Ascending aorta (tissue), 2 donors: ENCODE measurements at regions of chr17 and their contacts with region 1.

Region 1: DNA sequence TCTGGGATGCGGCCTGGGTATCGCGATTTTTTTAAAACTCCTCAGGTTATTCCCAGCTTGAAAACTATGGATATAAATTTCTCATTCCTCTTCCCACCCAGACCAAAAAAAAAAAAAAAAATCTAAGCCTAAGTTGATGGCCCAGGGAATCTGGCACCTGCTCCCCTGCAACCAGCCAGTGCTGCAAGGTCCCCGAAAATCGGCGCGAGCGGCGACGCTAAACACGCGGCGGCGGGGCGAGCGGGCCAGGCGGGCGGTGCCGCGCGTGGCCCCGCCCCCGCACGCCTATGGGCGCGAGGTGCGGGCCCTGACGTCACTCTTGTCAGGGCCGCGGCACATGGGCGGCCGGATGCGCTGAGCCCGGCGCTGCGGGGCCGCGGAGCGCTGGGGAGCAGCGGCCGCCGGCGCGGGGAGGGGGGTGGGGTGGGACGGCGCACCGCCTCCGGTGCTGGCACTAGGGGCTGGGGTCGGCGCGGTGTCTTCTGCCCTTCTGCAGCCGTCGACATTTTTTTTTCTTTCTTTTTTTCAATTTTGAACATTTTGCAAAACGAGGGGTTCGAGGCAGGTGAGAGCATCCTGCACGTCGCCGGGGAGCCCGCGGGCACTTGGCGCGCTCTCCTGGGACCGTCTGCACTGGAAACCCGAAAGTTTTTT is at the start of gene HLF:
- DNase-seq: peak in 1 of 2 donors; percentile 86
- H3K4me3 ChIP-seq: peak within 1 kb of the TSS; percentile 60 to 85
- H3K27ac ChIP-seq: peak within 1 kb of the TSS; percentile 85 to 90
- H3K4me1 ChIP-seq: peaks cover 10 to 17% of the 10 kb centered on the region in 2 donors
- H3K27me3 ChIP-seq: no peaks in the 10 kb centered on the region
- CTCF ChIP-seq: no peak
- total RNA-seq, gene HLF: 11.3 TPM

Region 2: DNA sequence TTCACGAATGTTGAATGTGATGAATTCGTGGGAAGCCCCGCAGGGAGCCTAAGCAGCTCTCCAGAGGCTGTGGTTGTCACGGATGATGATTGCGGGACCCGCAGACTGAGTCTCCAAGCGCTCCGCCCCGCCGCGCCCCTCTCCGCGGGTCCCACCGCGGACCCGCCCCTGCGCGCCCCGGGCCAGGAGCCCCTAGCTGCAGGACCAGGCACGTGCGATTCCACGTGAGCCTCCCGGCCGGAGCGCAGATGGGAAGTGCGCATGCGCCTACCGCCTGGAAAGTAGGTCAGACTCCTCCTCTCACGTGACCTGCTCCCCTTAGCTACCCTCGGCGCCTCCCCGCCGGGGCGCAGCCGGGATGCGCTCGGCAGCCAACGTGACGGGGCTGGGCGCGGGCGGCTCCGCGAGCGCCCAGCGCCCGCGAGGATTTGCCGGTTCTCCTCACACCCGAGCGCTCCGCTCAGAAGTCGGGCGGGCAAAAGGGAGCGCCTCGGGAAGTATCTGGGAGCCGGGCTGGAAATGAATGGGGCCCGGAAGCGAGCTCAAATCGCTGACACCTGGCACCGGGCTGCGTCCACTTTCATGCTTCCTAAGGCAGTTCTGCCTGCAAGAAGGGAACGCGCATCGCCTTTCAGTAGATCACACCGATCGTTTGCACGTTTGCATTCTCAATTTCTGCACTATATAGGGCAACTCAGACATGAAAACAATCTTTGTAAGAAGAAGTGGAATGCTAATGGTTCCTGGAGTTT is 26.4 kb before region 1 on chr17:
- intact Hi-C with region 1: loop called (anchors 1 kb)
- DNase-seq: peak; percentile 66 to 95
- H3K4me3 ChIP-seq: peak overlapping the region; percentile 55 to 65
- H3K27ac ChIP-seq: peak overlapping the region; percentile 33 to 47
- H3K4me1 ChIP-seq: peaks cover 5 to 10% of the 10 kb centered on the region in 2 donors
- H3K27me3 ChIP-seq: no peaks in the 10 kb centered on the region
- CTCF ChIP-seq: no peak

Region 3: DNA sequence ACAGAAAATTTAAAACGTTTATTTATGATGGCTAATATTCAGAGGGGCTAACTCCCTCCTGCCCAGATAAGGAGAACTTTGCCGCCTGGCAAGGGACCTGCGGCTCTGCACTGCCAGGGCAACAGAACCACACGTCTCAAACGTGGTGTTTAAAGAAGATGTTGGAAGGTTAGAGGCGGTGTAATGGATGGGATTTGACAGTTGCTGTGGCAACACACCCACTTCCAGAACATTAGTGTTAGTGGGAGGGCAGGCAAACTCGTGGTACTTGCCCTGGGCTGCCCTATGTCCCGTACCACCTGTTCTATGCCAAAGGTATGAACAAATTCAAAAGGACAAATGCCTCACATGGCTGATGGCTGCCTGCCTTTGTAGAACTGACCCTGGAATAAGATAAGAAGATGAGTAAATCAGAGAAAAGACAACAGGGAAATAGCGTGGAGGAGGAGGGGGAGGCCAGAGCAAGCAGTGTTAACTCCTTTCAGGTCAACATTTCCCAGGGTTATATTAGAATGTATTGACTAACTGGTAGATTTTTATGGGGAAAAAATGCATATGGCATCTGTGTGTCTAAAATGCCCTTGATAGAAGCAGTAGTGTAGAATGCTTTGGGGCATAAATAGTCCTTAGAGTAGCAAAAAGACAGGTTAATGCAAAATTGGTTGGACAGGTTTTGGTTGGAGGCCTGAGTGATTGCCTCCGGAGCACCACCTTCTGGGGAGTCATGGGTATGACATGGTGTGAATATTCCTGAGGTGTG is 30.8 kb after region 1 on chr17:
- intact Hi-C with region 1: loop called (anchors 1 kb)
- DNase-seq: peak in 1 of 2 donors; percentile 82
- H3K4me3 ChIP-seq: no peak overlapping the region
- H3K27ac ChIP-seq: peak overlapping the region; percentile 58 to 64
- H3K4me1 ChIP-seq: peaks cover 0 to 6% of the 10 kb centered on the region in 2 donors
- H3K27me3 ChIP-seq: no peaks in the 10 kb centered on the region
- CTCF ChIP-seq: peak; percentile 78 to 87 (median 85)

Region 4: GRCh38 chr17:55398689-55399088 is 133.9 kb after region 1 on chr17:
- intact Hi-C with region 1: no loop called
- DNase-seq: no peak
- H3K4me3 ChIP-seq: no peak overlapping the region
- H3K27ac ChIP-seq: no peak overlapping the region
- H3K4me1 ChIP-seq: no peaks in the 10 kb centered on the region
- H3K27me3 ChIP-seq: no peaks in the 10 kb centered on the region
- CTCF ChIP-seq: no peak

Region 5: GRCh38 chr17:55421179-55421934 is 156.6 kb after region 1 on chr17 and contains the start of gene MMD:
- intact Hi-C with region 1: loop called (anchors 5 kb)
- DNase-seq: peak in 1 of 2 donors; percentile 64
- H3K4me3 ChIP-seq: peak within 1 kb of the TSS; percentile 98 to 100
- H3K27ac ChIP-seq: peak within 1 kb of the TSS; percentile 71 to 73
- H3K4me1 ChIP-seq: no peaks in the 10 kb centered on the region
- H3K27me3 ChIP-seq: no peaks in the 10 kb centered on the region
- CTCF ChIP-seq: no peak
- total RNA-seq, gene MMD: 22.9 TPM

Region 6: DNA sequence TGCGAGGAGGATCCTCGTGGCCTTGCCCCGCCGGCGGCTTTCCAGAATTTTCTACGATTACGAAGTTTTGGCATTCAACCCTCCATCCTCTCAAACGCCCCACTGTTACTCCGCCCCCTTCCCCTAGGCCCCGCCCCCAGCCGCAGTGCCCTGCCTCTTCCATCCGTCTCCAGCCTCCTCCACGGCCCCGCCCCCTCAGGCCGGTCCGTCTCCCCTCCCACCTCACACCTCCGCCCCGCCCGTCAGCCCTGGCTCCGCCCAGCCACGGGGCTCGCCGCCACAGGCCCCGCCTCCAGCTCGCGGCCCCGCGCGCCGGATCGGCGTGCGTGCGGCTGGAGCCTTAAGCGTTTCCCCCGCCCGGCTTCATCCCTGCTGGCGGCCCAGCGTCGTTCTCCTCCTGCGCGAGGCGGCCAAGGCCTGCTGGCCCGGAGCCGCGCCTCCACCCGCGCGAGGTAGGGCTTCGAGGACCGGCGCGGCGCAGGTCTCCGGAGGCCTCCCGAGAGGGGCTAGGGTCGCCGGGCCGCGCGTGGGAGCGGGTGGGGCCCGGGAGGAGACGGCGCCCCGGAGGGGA is 1569.1 kb after region 1 on chr17 and contains the starts of genes C17orf67 and DGKE:
- intact Hi-C with region 1: loop called (anchors 10 kb)
- DNase-seq: peak; percentile 93 to 98
- H3K4me3 ChIP-seq: peak within 1 kb of the TSS; percentile 71 to 91
- H3K27ac ChIP-seq: peak within 1 kb of the TSS; percentile 80 to 82
- H3K4me1 ChIP-seq: peaks cover 0 to 16% of the 10 kb centered on the region in 2 donors
- H3K27me3 ChIP-seq: no peaks in the 10 kb centered on the region
- CTCF ChIP-seq: no peak
- total RNA-seq, gene C17orf67: 10.1 TPM
- total RNA-seq, gene DGKE: 85.0 TPM